Right ventricle myocardium inferior (tissue), 1 donor: ENCODE measurements at regions of chr9 and their contacts with region 1.

Region 1: DNA sequence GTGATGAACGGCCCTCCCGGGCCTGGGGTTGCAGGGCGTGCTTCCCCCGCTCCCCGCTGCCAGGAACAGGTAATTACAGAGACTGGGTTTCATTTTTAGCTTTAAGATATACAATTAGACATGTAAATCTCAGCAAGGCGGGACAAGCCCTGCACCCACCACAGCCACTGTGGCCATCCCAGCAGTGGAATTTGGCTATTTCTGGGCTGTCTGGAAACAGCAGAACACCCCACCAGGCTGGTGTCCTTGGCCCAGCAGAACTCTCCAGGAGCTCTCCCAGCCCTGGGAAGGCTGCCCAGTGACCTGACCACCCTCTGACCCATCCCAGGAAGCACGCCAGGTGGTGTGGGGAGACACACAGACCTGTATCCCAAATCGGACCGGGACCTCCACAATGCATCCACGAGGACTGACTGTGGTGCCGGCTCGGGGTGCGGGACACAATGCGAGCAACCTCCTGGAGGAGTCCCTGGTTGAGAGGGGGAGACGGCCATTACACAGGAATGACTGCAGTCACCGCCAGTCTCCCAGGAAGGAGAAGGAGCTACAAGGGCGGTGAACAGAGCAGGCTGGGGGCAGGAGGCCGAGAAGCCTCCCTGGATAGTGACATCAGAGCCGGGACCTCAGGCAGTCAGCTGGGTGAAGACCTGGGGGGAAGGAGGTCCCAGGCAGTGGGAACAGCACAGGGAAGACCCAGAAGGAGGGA is 17.3 kb downstream of the EEIG1 start:
- DNase-seq: peak; percentile 70
- ATAC-seq: no peak

Region 2: GRCh38 chr9:128053560-128053959 is 90.0 kb after region 1 on chr9:
- intact Hi-C with region 1: loop called (anchors 5 kb)
- DNase-seq: peak; percentile 75
- ATAC-seq: peak; percentile 32